PC-3 (cell line): ENCODE measurements at regions of chr6 and their contacts with region 1.

Region 1: DNA sequence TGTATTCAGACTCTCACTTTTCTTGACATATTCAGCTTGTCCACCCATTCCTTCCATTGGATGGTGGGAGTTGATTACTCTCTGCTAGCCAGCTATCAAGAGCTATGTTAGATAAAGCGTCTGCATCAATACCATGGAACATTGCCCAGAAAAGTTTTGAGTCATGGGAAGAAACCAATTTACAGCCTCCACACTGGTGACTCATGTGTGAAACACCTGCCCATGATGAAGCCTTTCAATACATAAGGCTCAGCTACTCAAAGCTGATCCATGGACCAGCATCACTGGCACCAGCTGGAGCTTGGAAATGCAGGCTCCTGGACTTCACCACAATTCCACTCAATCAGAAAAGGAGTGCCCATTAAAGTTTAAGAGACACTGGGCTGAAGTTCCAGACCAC is 16.1 kb downstream of the PLA2G7 start:
- DNase-seq: peak; percentile 98
- ATAC-seq: peak; percentile 81
- H3K4me3 ChIP-seq: no peak overlapping the region
- H3K27ac ChIP-seq: peak overlapping the region; percentile 95
- H3K4me1 ChIP-seq: peaks cover 76% of the 10 kb centered on the region
- H3K27me3 ChIP-seq: no peaks in the 10 kb centered on the region
- CTCF ChIP-seq: no peak

Region 2: DNA sequence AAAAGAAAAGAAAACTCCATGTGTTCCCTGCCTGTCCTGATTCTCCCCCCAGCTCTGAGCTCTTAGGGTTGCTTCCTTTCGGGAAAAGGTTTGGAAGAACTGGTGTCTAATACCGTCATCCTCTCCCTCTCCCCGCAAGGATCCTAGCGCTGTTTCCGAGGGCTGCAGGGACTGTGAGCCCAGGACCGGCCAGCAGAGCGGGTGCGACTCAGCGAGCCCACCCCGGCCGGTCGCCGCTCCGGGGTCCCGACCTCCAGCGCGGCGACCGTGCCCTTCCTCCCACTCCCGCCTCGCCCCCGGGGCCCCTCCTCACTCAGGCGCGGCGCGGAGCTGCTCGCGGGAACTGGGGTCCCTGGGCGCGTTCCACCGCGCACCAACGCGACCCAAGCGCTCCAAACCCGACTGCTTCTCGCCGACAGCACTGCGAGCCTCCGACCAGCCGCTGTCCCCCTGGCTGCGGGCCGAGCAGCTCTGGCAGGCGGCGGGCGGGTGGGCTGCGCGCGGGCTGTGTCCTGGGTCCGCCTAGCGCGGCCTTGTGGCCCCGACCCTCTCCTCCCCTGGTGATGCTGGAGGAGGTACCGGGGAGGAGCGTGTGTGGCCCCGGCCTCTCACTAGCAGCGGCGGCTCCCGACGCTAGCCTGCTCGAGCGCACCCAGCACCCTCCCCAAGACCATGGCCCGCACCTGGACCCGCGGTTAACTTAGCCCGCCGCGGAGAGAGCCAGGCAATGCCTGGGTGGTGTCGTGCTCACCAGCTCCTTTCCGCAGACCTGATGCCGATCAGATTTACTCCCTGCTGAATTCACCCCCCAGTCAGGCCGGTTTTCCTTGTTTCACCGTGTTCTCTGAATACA is 16.0 kb after region 1 on chr6 and contains the start of gene PLA2G7:
- CTCF ChIA-PET with region 1: no interaction called
- POLR2A ChIA-PET with region 1: no interaction called
- intact Hi-C with region 1: loop called (anchors 2 kb)
- DNase-seq: peak; percentile 69
- ATAC-seq: peak; percentile 65
- H3K4me3 ChIP-seq: peak within 1 kb of the TSS; percentile 87
- H3K27ac ChIP-seq: peak within 1 kb of the TSS; percentile 59
- H3K4me1 ChIP-seq: peaks cover 40% of the 10 kb centered on the region
- H3K27me3 ChIP-seq: no peaks in the 10 kb centered on the region
- CTCF ChIP-seq: no peak
- total RNA-seq, gene PLA2G7: 1.8 and 2.9 TPM in 2 replicates

Region 3: DNA sequence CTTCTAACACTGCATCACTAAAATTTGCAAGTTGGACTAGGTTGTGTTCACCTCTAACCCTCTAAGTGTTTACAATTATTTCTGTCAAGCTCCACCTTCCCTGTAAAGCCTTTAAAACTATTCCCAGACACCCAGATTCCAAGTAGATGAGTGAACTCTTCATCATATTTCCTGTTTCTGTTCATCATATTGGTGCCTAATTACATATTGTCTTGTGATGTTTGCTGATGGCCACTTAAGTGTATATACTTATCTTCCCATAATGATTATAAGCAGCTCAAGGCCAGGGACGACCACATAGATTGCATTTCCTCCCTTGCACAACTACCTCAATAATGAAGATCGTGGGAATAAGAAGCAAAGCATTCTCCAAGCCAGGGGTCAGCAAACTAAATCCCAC is 573.8 kb after region 1 on chr6:
- CTCF ChIA-PET with region 1: no interaction called
- POLR2A ChIA-PET with region 1: no interaction called
- intact Hi-C with region 1: loop called (anchors 10 kb)
- DNase-seq: peak; percentile 47
- ATAC-seq: peak; percentile 56
- H3K4me3 ChIP-seq: no peak overlapping the region
- H3K27ac ChIP-seq: peak overlapping the region; percentile 6; the same call in 1 of the 2 replicates
- H3K4me1 ChIP-seq: peaks cover 25% of the 10 kb centered on the region
- H3K27me3 ChIP-seq: no peaks in the 10 kb centered on the region
- CTCF ChIP-seq: no peak